Heart right ventricle (tissue), 16 donors: ENCODE measurements at regions of chr14 and their contacts with region 1.

Region 1: GRCh38 chr14:31340297-31341063 is 79.9 kb downstream of the HEATR5A start:
- DNase-seq: no peak
- ATAC-seq: no peak
- H3K4me3 ChIP-seq: no peak overlapping the region
- H3K27ac ChIP-seq: no peak overlapping the region
- H3K4me1 ChIP-seq: no peaks in the 10 kb centered on the region
- H3K27me3 ChIP-seq: no peaks in the 10 kb centered on the region
- CTCF ChIP-seq: no peak

Region 2: GRCh38 chr14:31096255-31096654 is 244.2 kb before region 1 on chr14:
- intact Hi-C with region 1: no loop called
- DNase-seq: no peak
- ATAC-seq: peak in 1 of 8 donors; percentile 23
- H3K4me3 ChIP-seq: no peak overlapping the region
- H3K27ac ChIP-seq: no peak overlapping the region
- H3K4me1 ChIP-seq: peaks cover 0 to 15% (median 9%) of the 10 kb centered on the region in 9 donors
- H3K27me3 ChIP-seq: no peaks in the 10 kb centered on the region
- CTCF ChIP-seq: no peak

Region 3: GRCh38 chr14:31118892-31119291 is 221.6 kb before region 1 on chr14:
- intact Hi-C with region 1: loop called in 1 of 10 experiments (anchors 10 kb)
- DNase-seq: no peak
- ATAC-seq: peak in 1 of 8 donors; percentile 22
- H3K4me3 ChIP-seq: no peak overlapping the region
- H3K27ac ChIP-seq: peak overlapping the region in 1 of 10 donors; percentile 11
- H3K4me1 ChIP-seq: no peaks in the 10 kb centered on the region
- H3K27me3 ChIP-seq: no peaks in the 10 kb centered on the region
- CTCF ChIP-seq: no peak

Region 4: DNA sequence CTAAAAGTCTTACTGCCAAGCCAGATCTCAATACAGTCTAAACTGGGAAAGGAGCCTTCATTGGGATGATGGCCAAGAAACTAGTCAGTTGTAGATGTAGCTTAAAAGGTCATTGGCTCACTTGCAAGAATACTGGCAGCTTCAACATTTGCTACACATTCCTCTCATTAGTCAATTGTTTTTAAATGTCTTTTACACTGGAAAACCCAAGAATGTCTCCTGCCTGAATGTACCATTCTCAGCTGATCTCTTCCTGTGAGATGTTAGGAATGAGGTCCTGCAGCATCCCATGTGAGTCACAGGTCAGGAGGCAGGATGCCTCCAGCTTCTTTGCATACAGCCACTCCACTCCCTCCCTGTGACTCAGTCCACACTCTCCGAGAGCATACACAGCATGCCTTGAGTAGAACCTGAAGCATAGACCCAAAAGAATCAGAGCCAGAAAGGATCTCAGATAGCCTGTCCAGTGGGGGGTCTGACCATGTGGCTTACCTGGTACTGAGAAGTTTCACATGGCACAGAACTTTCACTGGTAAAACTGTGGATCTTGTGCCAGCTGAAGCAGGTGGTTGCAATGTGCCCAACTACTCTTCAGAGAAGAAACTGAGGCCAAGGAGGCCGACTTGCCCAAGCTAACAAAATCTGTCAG is 76.9 kb before region 1 on chr14:
- intact Hi-C with region 1: no loop called
- DNase-seq: peak in 1 of 2 donors; percentile 17
- ATAC-seq: peak; percentile 59 to 95 (median 87)
- H3K4me3 ChIP-seq: no peak overlapping the region
- H3K27ac ChIP-seq: peak overlapping the region in 3 of 10 donors; percentile 36 to 53 (median 49)
- H3K4me1 ChIP-seq: peaks cover 0 to 28% (median 24%) of the 10 kb centered on the region in 9 donors
- H3K27me3 ChIP-seq: no peaks in the 10 kb centered on the region
- CTCF ChIP-seq: no peak

Region 5: DNA sequence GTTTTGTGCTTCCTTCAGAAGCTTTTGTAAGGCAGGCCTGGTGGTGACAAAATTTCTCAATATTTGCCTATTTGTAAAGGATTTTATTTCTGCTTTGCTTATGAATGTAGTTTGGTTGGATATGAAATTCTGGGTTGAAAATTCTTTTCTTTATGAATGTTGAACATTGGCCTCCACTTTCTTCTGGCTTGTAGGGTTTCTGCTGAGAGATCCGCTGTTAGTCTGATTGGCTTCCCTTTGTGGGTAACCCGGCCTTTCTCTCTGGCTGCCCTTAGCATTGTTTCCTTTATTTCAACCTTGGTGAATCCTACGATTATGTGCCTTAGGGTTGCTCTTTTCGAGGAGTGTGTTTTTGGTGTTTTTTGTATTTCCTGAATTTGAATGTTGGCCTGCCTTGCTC is 279.0 kb after region 1 on chr14:
- intact Hi-C with region 1: no loop called
- DNase-seq: no peak
- ATAC-seq: no peak
- H3K4me3 ChIP-seq: no peak overlapping the region
- H3K27ac ChIP-seq: no peak overlapping the region
- H3K4me1 ChIP-seq: no peaks in the 10 kb centered on the region
- H3K27me3 ChIP-seq: no peaks in the 10 kb centered on the region
- CTCF ChIP-seq: no peak